MCF 10A (cell line): ENCODE measurements at regions of chr1 and their contacts with region 1.

Region 1: GRCh38 chr1:237799762-237800474 is 90.8 kb downstream of the ZP4 start:
- DNase-seq: peak; percentile 96
- H3K4me3 Mint-ChIP-seq: no peak overlapping the region
- H3K27ac Mint-ChIP-seq: no peak overlapping the region
- H3K4me1 Mint-ChIP-seq: no peaks in the 10 kb centered on the region
- H3K27me3 Mint-ChIP-seq: no peaks in the 10 kb centered on the region
- CTCF ChIP-seq: peak; percentile 76

Region 2: GRCh38 chr1:237562242-237562823 is 237.6 kb before region 1 on chr1:
- CTCF ChIA-PET with region 1: interaction called, 10 read pairs
- POLR2A ChIA-PET with region 1: no interaction called
- intact Hi-C with region 1: loop called (anchors 1 kb)
- DNase-seq: peak; percentile 89
- H3K4me3 Mint-ChIP-seq: no peak overlapping the region
- H3K27ac Mint-ChIP-seq: no peak overlapping the region
- H3K4me1 Mint-ChIP-seq: no peaks in the 10 kb centered on the region
- H3K27me3 Mint-ChIP-seq: no peaks in the 10 kb centered on the region
- CTCF ChIP-seq: peak; percentile 79

Region 3: GRCh38 chr1:237672748-237673147 is 127.2 kb before region 1 on chr1:
- CTCF ChIA-PET with region 1: interaction called, 466 read pairs
- POLR2A ChIA-PET with region 1: interaction called, 6 read pairs
- intact Hi-C with region 1: loop called (anchors 1 kb)
- DNase-seq: peak; percentile 65
- H3K4me3 Mint-ChIP-seq: no peak overlapping the region
- H3K27ac Mint-ChIP-seq: no peak overlapping the region
- H3K4me1 Mint-ChIP-seq: peaks cover 5% of the 10 kb centered on the region
- H3K27me3 Mint-ChIP-seq: no peaks in the 10 kb centered on the region
- CTCF ChIP-seq: peak; percentile 56

Region 4: GRCh38 chr1:237736372-237737029 is 63.4 kb before region 1 on chr1:
- CTCF ChIA-PET with region 1: interaction called, 11 read pairs
- POLR2A ChIA-PET with region 1: no interaction called
- intact Hi-C with region 1: no loop called
- DNase-seq: peak; percentile 54
- H3K4me3 Mint-ChIP-seq: no peak overlapping the region
- H3K27ac Mint-ChIP-seq: no peak overlapping the region
- H3K4me1 Mint-ChIP-seq: peaks cover 6% of the 10 kb centered on the region
- H3K27me3 Mint-ChIP-seq: no peaks in the 10 kb centered on the region
- CTCF ChIP-seq: peak; percentile 60

Region 5: GRCh38 chr1:237774246-237774645 is 25.7 kb before region 1 on chr1:
- CTCF ChIA-PET with region 1: interaction called, 19 read pairs
- POLR2A ChIA-PET with region 1: interaction called, 3 read pairs
- intact Hi-C with region 1: no loop called
- DNase-seq: peak; percentile 24
- H3K4me3 Mint-ChIP-seq: no peak overlapping the region
- H3K27ac Mint-ChIP-seq: no peak overlapping the region
- H3K4me1 Mint-ChIP-seq: no peaks in the 10 kb centered on the region
- H3K27me3 Mint-ChIP-seq: no peaks in the 10 kb centered on the region
- CTCF ChIP-seq: no peak

Region 6: DNA sequence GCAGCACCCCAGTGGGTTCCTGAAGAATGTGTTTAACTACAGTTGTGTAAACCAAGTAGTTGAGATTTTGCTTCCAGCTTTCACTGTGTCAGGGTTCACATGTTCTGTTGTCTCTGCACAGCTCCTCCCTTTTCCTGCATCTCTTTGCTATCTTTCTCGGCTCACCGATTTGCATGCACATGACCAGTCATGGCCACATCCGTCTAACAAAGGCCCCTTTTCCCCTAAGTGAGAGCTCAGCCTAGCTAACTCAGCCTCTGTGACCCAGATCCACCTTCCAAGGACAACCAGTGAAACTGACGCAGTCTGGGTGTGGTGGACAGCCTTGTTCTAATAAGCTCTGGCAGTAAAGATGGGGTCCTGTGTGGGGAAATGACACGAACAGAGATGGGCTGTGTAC is 10.3 kb before region 1 on chr1:
- CTCF ChIA-PET with region 1: interaction called, 14 read pairs
- POLR2A ChIA-PET with region 1: no interaction called
- intact Hi-C with region 1: no loop called
- DNase-seq: no peak
- H3K4me3 Mint-ChIP-seq: no peak overlapping the region
- H3K27ac Mint-ChIP-seq: no peak overlapping the region
- H3K4me1 Mint-ChIP-seq: no peaks in the 10 kb centered on the region
- H3K27me3 Mint-ChIP-seq: no peaks in the 10 kb centered on the region
- CTCF ChIP-seq: no peak